ENCODE measurements at regions of chr3 and their contacts with region 1.

Region 1: GRCh38 chr3:10248184-10249080 is at the start of gene TATDN2:
- DNase-seq: peak; percentile 69 to 94 (median 92)
- H3K4me3 ChIP-seq: peak within 1 kb of the TSS; percentile 62 to 95 (median 84)
- H3K27ac ChIP-seq: peak within 1 kb of the TSS in 58 of 59 donors; percentile 14 to 93 (median 78)
- H3K27me3 ChIP-seq: no peaks in the 10 kb centered on the region
- CTCF ChIP-seq: peak in 20 of 56 donors; percentile 4 to 45 (median 28)
- total RNA-seq, gene TATDN2: 28.5 to 54.1 (median 41.6) TPM

Region 2: DNA sequence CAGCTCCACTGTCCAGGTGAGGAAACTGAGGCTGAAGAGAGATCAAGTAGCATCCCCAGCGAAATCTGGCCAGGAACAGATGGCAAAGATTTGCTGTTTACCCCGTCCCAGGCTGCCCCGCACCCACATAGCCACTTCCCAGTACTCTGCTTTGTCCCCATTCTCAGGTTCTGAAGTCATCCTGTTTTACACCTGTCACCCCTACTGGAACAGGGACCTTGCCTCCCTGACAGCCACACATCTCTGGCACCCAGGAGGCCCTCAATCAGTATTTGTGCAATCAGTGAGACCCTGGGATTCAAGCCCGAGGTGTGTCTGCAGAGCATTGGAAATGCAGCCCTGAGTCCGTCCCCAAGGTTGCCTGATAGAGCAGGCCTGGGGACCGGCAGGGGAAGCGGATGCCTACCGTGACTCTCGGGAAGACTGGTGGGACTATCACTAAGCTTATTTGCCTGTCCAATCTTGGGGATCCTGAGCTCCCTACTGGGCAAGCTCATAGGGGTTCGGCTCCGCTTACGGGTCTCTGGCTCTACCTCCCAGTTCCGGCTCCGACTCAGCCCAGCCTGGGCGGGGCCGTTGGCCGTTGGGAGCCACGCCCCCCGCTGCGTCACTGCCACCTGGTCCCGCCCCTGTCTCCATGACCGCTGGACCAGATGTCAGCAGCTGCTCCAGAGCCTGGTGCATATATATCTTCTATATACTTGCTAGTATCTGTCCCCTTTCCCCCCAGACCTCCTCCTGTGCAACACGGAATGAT is 239.7 kb before region 1 on chr3:
- intact Hi-C with region 1: loop called in 1 of 2 experiments (anchors 10 kb)
- DNase-seq: peak; percentile 69 to 90 (median 84)
- H3K4me3 ChIP-seq: peak overlapping the region in 58 of 59 donors; percentile 1 to 72 (median 54)
- H3K27ac ChIP-seq: peak overlapping the region in 32 of 59 donors; percentile 3 to 85 (median 48)
- H3K27me3 ChIP-seq: no peaks in the 10 kb centered on the region
- CTCF ChIP-seq: no peak

Region 3: DNA sequence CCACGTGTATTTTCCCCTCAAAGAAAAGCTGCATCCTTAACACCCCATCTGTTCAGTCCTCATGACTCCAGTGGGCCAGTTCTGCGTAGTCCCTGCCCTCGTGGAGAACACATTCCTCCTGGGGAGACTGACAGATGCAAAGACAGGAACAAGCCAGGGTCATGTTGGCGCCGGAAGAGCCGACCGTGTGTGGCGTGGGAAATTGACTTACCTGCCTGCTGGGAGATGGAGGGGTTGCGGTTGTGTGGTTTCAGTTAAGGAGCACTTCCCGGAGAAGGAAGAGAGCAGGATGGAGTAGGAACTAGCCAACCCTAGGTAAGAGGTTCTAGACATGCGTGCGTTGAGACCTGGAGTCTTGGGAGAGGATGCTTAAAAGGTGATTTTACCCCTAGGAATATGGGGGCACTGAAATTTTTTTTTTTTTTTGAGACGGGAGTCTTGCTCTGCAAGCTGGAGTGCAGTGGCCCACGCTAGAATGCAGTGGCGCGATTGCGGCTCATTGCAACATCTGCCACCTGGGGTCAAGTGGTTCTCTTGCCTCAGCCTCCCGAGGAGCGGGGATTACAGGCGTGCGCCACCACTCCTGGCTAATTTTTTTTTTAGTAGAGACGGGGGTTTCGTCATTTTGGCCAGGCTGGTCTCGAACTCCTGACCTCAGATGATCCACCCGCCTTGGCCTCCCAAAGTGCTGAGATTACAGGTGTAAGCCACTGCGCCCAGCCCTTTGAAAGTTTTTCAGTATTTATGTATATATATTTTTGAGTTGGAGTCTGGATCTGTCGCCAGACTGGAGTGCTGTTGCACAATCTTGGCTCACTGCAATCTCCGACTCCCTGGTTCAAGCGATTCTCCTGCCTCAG is 105.5 kb before region 1 on chr3:
- intact Hi-C with region 1: loop called in 1 of 2 experiments (anchors 2 kb)
- DNase-seq: no peak
- H3K4me3 ChIP-seq: peak overlapping the region; percentile 53 to 97 (median 88)
- H3K27ac ChIP-seq: peak overlapping the region in 14 of 59 donors; percentile 41 to 94 (median 90)
- H3K27me3 ChIP-seq: no peaks in the 10 kb centered on the region
- CTCF ChIP-seq: no peak

Measured in dorsolateral prefrontal cortex (tissue), 120 donors.